ENCODE measurements at regions of chr9 and their contacts with region 1.

Region 1: GRCh38 chr9:6667633-6668280 is 22.2 kb upstream of the GLDC start:
- DNase-seq: no peak
- H3K4me3 ChIP-seq: no peak overlapping the region
- H3K27ac ChIP-seq: no peak overlapping the region
- H3K4me1 ChIP-seq: no peaks in the 10 kb centered on the region
- H3K27me3 ChIP-seq: no peaks in the 10 kb centered on the region
- CTCF ChIP-seq: peak in 4 of 6 experiments; percentile 14 to 59 (median 58)
- POLR2A ChIP-seq: no peak

Region 2: GRCh38 chr9:6353851-6354686 is 313.7 kb before region 1 on chr9:
- intact Hi-C with region 1: loop called (anchors 10 kb)
- DNase-seq: no peak
- H3K4me3 ChIP-seq: no peak overlapping the region
- H3K27ac ChIP-seq: no peak overlapping the region
- H3K4me1 ChIP-seq: no peaks in the 10 kb centered on the region
- H3K27me3 ChIP-seq: no peaks in the 10 kb centered on the region
- CTCF ChIP-seq: peak; percentile 43 to 75 (median 62)
- POLR2A ChIP-seq: no peak

Region 3: DNA sequence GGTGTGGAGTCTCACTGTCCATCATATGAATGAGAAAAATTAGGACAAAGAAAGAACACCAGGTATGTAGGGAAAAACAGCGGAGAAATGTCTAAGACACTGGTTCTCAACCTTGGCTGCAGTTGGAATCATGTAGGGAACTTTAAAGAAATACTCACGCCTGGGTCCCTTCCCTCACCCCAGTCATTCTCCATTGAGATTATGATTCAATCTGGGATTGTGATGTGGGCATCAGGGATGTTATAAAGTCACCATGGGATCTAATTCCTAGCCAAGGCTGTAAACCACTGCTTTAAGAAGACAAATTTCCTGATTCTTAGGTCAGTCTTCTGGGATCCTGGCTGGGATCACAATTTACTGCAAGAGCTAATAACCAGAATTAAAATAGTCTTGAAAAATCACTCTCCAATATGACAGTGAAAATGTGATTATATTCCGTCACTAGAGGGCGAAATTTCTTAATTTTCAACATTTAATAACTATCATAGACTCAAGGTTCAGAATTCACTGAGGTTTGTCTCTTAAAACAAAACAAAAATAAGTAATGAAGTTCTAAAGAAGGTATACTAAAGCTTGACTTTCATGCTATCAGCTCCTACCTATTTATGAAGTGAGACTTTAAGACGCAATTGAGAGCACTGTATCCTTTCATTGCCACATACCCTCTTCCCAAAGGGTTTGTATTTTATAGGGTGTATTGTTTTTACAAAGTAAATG is 82.7 kb before region 1 on chr9:
- intact Hi-C with region 1: loop called (anchors 10 kb)
- DNase-seq: no peak
- H3K4me3 ChIP-seq: no peak overlapping the region
- H3K27ac ChIP-seq: no peak overlapping the region
- H3K4me1 ChIP-seq: no peaks in the 10 kb centered on the region
- H3K27me3 ChIP-seq: no peaks in the 10 kb centered on the region
- CTCF ChIP-seq: peak in 4 of 6 experiments; percentile 33 to 71 (median 50)
- POLR2A ChIP-seq: no peak